ENCODE measurements at regions of chr7 and their contacts with region 1.

Region 1: DNA sequence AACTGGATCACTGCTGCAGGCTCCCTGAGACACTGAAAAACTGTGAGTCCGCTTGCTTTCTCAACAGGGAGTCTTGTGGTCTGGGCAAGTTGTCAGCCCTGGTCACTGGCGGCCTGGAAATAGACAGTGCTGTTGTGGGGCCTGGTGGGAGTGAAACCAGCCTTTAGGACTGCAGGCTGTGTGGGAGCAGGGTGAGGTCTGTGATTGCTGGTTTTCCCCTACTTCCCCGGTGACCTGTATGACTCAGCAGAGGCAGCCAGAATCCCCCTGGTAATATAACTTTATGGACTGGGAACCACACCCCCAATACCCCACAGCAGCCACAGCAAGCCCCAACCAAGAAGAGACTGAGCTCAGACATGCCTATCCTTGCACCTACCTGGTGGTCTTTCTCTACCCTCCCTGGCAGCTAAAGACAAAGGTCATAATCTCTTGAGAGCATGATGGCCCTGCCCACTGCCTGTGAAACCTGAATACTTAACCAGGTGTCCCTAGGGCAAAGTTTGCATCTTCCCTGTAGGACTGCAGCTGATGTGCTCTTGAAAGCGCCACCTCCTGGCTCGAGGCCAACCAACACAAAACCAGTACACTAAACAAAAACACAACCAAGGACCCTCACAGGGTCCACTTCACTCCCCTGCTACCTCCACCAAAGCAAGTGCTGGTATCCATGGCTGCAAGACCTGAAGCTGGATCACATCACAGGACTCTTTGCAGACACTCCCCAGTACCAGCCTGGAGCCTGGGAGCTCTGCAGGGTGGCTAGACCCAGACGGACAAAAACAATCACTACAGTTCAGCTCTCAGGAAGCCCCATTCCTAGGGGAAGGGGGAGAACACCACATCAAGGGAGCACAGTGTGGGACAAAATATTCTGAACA is 7.2 kb upstream of the ADAM22 start:
- DNase-seq: peak; percentile 95
- ATAC-seq: peak; percentile 90
- H3K4me3 ChIP-seq: peak overlapping the region; percentile 62
- H3K27ac ChIP-seq: peak overlapping the region; percentile 92
- H3K4me1 ChIP-seq: peaks cover 9% of the 10 kb centered on the region
- H3K27me3 ChIP-seq: no peaks in the 10 kb centered on the region
- CTCF ChIP-seq: peak; percentile 36 to 48 (median 40)
- EP300 ChIP-seq: peak in 1 of 2 experiments; percentile 91; a peak in 3 of 4 replicates
- POLR2A ChIP-seq: peak; percentile 69
- RAD21 ChIP-seq: peak; percentile 10; the same call in 1 of the 2 replicates

Region 2: GRCh38 chr7:87474533-87475358 is 452.1 kb before region 1 on chr7:
- CTCF ChIA-PET with region 1: no interaction called
- POLR2A ChIA-PET with region 1: interaction called, 3 read pairs
- RAD21 ChIA-PET with region 1: interaction called, 4 read pairs
- SMC1A ChIA-PET with region 1: no interaction called
- in situ Hi-C with region 1: no loop called
- intact Hi-C with region 1: loop called (anchors 2 kb)
- DNase-seq: peak; percentile 96
- ATAC-seq: peak; percentile 80
- H3K4me3 ChIP-seq: peak overlapping the region; percentile 77
- H3K27ac ChIP-seq: peak overlapping the region; percentile 72
- H3K4me1 ChIP-seq: peaks cover 12% of the 10 kb centered on the region
- H3K27me3 ChIP-seq: no peaks in the 10 kb centered on the region
- CTCF ChIP-seq: no peak
- EP300 ChIP-seq: peak; percentile 87 to 88
- POLR2A ChIP-seq: 0 out of 2 replicates have a peak, but pooled peaks have one; percentile 18
- RAD21 ChIP-seq: 0 out of 2 replicates have a peak, but pooled peaks have one; percentile 1

Region 3: GRCh38 chr7:87886875-87887274 is 39.9 kb before region 1 on chr7:
- CTCF ChIA-PET with region 1: interaction called, 14 read pairs
- POLR2A ChIA-PET with region 1: interaction called, 6 read pairs
- RAD21 ChIA-PET with region 1: interaction called, 11 read pairs
- SMC1A ChIA-PET with region 1: interaction called, 34 read pairs
- in situ Hi-C with region 1: no loop called
- intact Hi-C with region 1: no loop called
- DNase-seq: no peak
- ATAC-seq: no peak
- H3K4me3 ChIP-seq: no peak overlapping the region
- H3K27ac ChIP-seq: no peak overlapping the region
- H3K4me1 ChIP-seq: no peaks in the 10 kb centered on the region
- H3K27me3 ChIP-seq: no peaks in the 10 kb centered on the region
- CTCF ChIP-seq: peak in 2 of 3 experiments; percentile 8 to 32; a peak in 2 of 6 replicates
- EP300 ChIP-seq: no peak
- POLR2A ChIP-seq: no peak
- RAD21 ChIP-seq: peak; percentile 56

Region 4: DNA sequence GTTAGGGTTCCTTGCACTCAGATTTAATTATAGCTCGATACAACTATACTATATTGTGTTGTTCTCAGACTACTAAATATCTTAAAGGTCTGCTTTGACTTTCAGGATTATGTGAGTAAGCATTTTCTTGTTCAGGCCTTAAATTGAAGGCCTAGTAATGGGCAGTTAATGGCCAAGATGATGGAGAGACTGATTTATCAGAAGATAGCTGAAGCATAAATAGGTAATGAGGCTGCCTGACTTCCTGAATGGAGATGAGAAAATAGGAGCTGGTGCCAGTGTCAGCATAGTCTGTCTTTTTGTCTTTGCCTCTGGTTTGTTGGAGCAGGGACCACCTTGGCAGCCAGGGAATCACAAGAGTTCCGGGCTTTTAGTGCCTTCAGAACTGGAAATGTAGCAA is 39.5 kb after region 1 on chr7:
- CTCF ChIA-PET with region 1: interaction called, 10 read pairs
- POLR2A ChIA-PET with region 1: no interaction called
- RAD21 ChIA-PET with region 1: interaction called, 3 read pairs
- SMC1A ChIA-PET with region 1: no interaction called
- in situ Hi-C with region 1: no loop called
- intact Hi-C with region 1: no loop called
- DNase-seq: no peak
- ATAC-seq: no peak
- H3K4me3 ChIP-seq: no peak overlapping the region
- H3K27ac ChIP-seq: no peak overlapping the region
- H3K4me1 ChIP-seq: no peaks in the 10 kb centered on the region
- H3K27me3 ChIP-seq: no peaks in the 10 kb centered on the region
- CTCF ChIP-seq: no peak
- EP300 ChIP-seq: no peak
- POLR2A ChIP-seq: no peak
- RAD21 ChIP-seq: no peak

Region 5: GRCh38 chr7:88071994-88072714 is 145.3 kb after region 1 on chr7:
- CTCF ChIA-PET with region 1: interaction called, 8 read pairs
- POLR2A ChIA-PET with region 1: interaction called, 8 read pairs
- RAD21 ChIA-PET with region 1: interaction called, 5 read pairs
- SMC1A ChIA-PET with region 1: interaction called, 20 read pairs
- in situ Hi-C with region 1: no loop called
- intact Hi-C with region 1: no loop called
- DNase-seq: peak; percentile 33
- ATAC-seq: peak; percentile 91
- H3K4me3 ChIP-seq: peak overlapping the region; percentile 22; the same call in 1 of the 2 replicates
- H3K27ac ChIP-seq: peak overlapping the region; percentile 64
- H3K4me1 ChIP-seq: peaks cover 6% of the 10 kb centered on the region; the same call in 1 of the 2 replicates
- H3K27me3 ChIP-seq: no peaks in the 10 kb centered on the region
- CTCF ChIP-seq: no peak
- EP300 ChIP-seq: no peak
- POLR2A ChIP-seq: no peak
- RAD21 ChIP-seq: no peak

Region 6: GRCh38 chr7:88111136-88111743 is 184.4 kb after region 1 on chr7:
- CTCF ChIA-PET with region 1: interaction called, 21 read pairs
- POLR2A ChIA-PET with region 1: interaction called, 6 read pairs
- RAD21 ChIA-PET with region 1: interaction called, 15 read pairs
- SMC1A ChIA-PET with region 1: interaction called, 10 read pairs
- in situ Hi-C with region 1: no loop called
- intact Hi-C with region 1: loop called (anchors 5 kb)
- DNase-seq: no peak
- ATAC-seq: peak; percentile 74
- H3K4me3 ChIP-seq: no peak overlapping the region
- H3K27ac ChIP-seq: no peak overlapping the region
- H3K4me1 ChIP-seq: no peaks in the 10 kb centered on the region
- H3K27me3 ChIP-seq: no peaks in the 10 kb centered on the region
- CTCF ChIP-seq: peak; percentile 34 to 61 (median 44); a peak in 5 of 6 replicates
- EP300 ChIP-seq: no peak
- POLR2A ChIP-seq: no peak
- RAD21 ChIP-seq: peak; percentile 83

Measured in GM12878 (cell line).